ENCODE measurements at regions of chr19 and their contacts with region 1.

Region 1: GRCh38 chr19:49869441-49870176 is 2.2 kb upstream of the PNKP start:
- DNase-seq: peak; percentile 97
- ATAC-seq: peak; percentile 80
- H3K4me3 ChIP-seq: peak overlapping the region; percentile 42 to 74 (median 69)
- H3K4me3 Mint-ChIP-seq: no peak overlapping the region
- H3K27ac ChIP-seq: peak overlapping the region; percentile 97 to 98
- H3K27ac Mint-ChIP-seq: peak overlapping the region; percentile 77
- H3K4me1 ChIP-seq: peaks cover 30 to 50% of the 10 kb centered on the region in 2 donors
- H3K4me1 Mint-ChIP-seq: peaks cover 42% of the 10 kb centered on the region
- H3K27me3 ChIP-seq: no peaks in the 10 kb centered on the region
- H3K27me3 Mint-ChIP-seq: no peaks in the 10 kb centered on the region
- CTCF ChIP-seq: no peak

Region 2: DNA sequence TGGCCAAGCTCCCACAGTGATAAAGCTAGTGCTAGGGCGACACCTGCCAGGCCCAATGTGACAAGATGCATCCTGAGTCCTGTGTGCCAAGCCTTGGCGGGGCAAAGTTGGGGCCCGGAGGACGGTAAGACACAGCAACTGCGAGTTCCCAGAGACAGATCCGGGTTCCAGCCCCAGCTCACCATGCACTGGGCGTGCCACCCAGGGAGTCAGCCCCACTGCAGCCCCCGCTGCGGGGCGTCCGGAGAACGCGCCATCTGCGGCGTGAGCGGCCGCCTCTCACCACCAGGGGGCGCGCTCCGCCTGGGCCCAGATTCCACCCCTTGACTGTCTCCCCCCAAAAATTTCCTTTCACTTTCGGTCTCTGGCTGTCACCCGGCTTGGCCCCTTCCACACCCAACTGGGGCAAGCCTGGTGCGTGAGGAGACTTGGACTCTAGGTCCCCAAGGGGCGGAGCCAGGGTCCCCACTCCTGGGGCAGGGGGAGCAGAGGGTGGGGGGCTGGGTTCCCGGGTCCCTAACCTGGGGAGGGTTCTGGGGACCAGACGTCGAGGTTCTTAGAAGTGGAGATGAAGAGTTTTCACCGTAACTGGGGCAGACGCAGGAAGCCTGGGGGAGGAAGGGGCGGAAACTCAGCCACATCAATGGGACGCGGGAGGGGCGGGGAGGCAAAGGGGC is 395.6 kb before region 1 on chr19 and contains the start of gene FLT3LG:
- CTCF ChIA-PET with region 1: no interaction called
- POLR2A ChIA-PET with region 1: no interaction called
- intact Hi-C with region 1: no loop called
- DNase-seq: peak; percentile 94
- ATAC-seq: peak; percentile 52
- H3K4me3 ChIP-seq: peak within 1 kb of the TSS in 4 of 5 experiments; percentile 53 to 98 (median 70)
- H3K4me3 Mint-ChIP-seq: peak within 1 kb of the TSS; percentile 93
- H3K27ac ChIP-seq: peak within 1 kb of the TSS; percentile 75 to 81
- H3K27ac Mint-ChIP-seq: peak within 1 kb of the TSS; percentile 97
- H3K4me1 ChIP-seq: peaks cover 43 to 73% of the 10 kb centered on the region in 2 donors
- H3K4me1 Mint-ChIP-seq: peaks cover 57% of the 10 kb centered on the region
- H3K27me3 ChIP-seq: no peaks in the 10 kb centered on the region
- H3K27me3 Mint-ChIP-seq: no peaks in the 10 kb centered on the region
- CTCF ChIP-seq: peak; percentile 89
- total RNA-seq, gene FLT3LG: 27.8 and 31.0 TPM in 2 replicates

Region 3: DNA sequence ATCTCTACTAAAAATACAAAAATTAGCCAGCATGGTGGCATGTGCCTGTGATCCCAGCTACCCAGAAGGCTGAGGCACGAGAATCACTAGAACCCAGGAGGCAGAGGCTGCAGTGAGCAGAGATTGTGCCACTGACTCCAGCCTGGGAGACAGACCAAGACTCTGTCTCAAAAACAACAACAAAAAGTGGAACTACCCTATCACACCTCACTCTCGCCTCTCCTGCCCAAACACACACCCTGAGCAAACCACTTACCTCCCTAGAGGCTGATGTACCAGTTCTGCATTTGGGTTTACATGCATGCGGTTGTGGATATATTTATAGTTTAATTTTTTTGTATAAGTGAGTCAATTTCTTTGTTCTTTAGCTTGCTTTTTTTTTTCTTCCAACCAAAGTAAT is 26.3 kb before region 1 on chr19:
- CTCF ChIA-PET with region 1: interaction called, 3 read pairs
- POLR2A ChIA-PET with region 1: interaction called, 10 read pairs
- intact Hi-C with region 1: loop called (anchors 2 kb)
- DNase-seq: peak; percentile 83
- ATAC-seq: peak; percentile 99
- H3K4me3 ChIP-seq: peak overlapping the region in 3 of 5 experiments; percentile 17 to 52 (median 39)
- H3K4me3 Mint-ChIP-seq: peak overlapping the region; percentile 58
- H3K27ac ChIP-seq: peak overlapping the region; percentile 74 to 84
- H3K27ac Mint-ChIP-seq: peak overlapping the region; percentile 84
- H3K4me1 ChIP-seq: peaks cover 37 to 51% of the 10 kb centered on the region in 2 donors
- H3K4me1 Mint-ChIP-seq: peaks cover 47% of the 10 kb centered on the region
- H3K27me3 ChIP-seq: no peaks in the 10 kb centered on the region
- H3K27me3 Mint-ChIP-seq: no peaks in the 10 kb centered on the region
- CTCF ChIP-seq: no peak

Region 4: DNA sequence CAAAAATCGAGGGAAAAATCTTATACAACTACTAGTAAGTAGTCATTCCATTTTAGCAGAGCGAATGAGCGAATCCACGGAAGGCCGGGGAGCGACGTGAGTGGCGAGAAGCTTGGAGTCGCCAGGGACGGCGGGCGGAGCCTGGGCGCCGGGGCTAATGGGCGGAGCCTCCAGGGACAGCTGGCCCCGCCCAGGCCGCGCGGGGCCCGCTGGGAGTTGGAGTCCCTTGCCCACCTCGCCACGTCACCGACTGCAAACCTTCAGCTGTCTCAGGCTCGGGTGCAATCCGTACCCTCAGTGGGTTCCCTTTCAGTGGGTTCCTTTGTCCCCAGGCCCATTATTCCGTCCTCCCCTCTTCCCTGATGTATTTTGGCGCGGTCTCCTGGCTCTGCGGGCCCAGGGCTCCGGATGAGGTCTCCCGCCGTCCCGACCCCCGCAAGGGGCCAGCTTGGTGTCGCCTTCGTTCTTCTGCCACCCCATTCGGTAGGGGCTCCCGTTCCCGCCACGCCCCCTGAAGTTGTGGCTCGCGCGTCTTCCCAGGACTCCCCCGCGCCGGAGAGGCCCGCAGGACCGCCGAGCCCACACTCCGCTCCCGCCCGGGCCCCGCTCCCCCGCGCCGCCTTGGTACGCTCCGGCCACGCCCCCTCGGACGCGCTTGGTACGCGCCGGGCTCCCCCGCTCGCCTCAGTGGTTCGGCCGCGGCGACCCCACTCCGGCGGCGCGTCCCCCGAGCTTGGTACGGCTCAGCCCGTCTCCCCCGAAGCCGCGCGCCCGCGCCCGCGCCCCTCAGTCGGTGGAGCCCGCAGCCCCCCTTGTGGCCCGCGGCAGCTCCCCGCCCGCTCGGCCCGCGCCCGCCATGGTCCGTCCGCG is 18.9 kb before region 1 on chr19 and contains the start of gene PTOV1:
- CTCF ChIA-PET with region 1: interaction called, 5 read pairs
- POLR2A ChIA-PET with region 1: interaction called, 40 read pairs
- intact Hi-C with region 1: loop called (anchors 1 kb)
- DNase-seq: peak; percentile 93
- ATAC-seq: peak; percentile 82
- H3K4me3 ChIP-seq: peak within 1 kb of the TSS; percentile 73 to 95 (median 89)
- H3K4me3 Mint-ChIP-seq: peak within 1 kb of the TSS; percentile 93
- H3K27ac ChIP-seq: peak within 1 kb of the TSS; percentile 91 to 95
- H3K27ac Mint-ChIP-seq: peak within 1 kb of the TSS; percentile 98
- H3K4me1 ChIP-seq: peaks cover 30 to 49% of the 10 kb centered on the region in 2 donors
- H3K4me1 Mint-ChIP-seq: peaks cover 48% of the 10 kb centered on the region
- H3K27me3 ChIP-seq: no peaks in the 10 kb centered on the region
- H3K27me3 Mint-ChIP-seq: no peaks in the 10 kb centered on the region
- CTCF ChIP-seq: no peak
- total RNA-seq, gene PTOV1: 225 and 230 TPM in 2 replicates